H1 (cell line): ENCODE measurements at regions of chr9 and their contacts with region 1.

Region 1: DNA sequence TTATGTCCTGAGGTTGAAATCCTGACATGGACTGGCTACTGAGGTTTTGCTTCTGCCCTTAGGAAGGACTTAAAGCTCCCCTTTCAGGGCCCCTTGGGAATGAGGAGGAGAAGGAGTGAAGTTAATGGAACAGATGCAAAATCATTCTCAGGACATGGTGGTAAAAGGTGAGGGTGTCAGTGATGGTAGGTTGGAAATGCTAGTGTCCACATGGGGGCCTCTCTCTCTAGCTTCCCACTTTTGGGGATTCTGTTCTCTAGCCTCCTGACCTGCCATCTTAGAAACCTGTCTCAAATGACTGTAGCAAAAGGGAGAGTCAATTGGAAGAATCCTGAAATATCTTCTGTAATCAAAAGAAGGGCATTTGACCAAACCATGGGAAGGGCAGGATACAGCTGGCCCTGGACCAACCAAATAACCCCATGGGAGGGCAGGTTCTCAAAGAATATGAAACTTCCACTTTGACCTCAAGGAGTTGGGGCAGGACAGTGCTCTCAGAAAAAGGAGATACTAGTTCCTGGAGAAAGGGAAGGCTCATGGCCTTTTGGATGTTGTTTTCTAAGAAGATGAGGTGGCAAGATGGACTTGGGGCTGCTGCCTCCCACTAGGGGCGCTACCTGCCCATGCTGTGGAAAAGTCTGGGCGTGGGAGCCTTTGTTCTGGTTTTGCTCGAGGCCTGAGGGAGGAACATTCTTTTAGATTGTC is 21.2 kb upstream of the MLANA start:
- DNase-seq: peak in 1 of 2 experiments; percentile 70
- H3K4me3 ChIP-seq: no peak overlapping the region
- H3K27ac ChIP-seq: no peak overlapping the region
- H3K4me1 ChIP-seq: peaks cover 0 to 2% (median 2%) of the 10 kb centered on the region in 4 experiments; a peak in 4 of 7 replicates
- H3K27me3 ChIP-seq: no peaks in the 10 kb centered on the region
- CTCF ChIP-seq: peak; percentile 59 to 81 (median 74)
- EP300 ChIP-seq: no peak
- POLR2A ChIP-seq: no peak
- RAD21 ChIP-seq: peak; percentile 63 to 65

Region 2: GRCh38 chr9:5857928-5858327 is 11.5 kb before region 1 on chr9:
- CTCF ChIA-PET with region 1: interaction called, 13 read pairs
- POLR2A ChIA-PET with region 1: interaction called, 4 read pairs
- DNase-seq: no peak
- H3K4me3 ChIP-seq: no peak overlapping the region
- H3K27ac ChIP-seq: no peak overlapping the region
- H3K4me1 ChIP-seq: no peaks in the 10 kb centered on the region
- H3K27me3 ChIP-seq: no peaks in the 10 kb centered on the region
- CTCF ChIP-seq: no peak
- EP300 ChIP-seq: no peak
- POLR2A ChIP-seq: no peak
- RAD21 ChIP-seq: no peak

Region 3: GRCh38 chr9:5899292-5899691 is 29.8 kb after region 1 on chr9:
- CTCF ChIA-PET with region 1: interaction called, 17 read pairs
- POLR2A ChIA-PET with region 1: no interaction called
- DNase-seq: no peak
- H3K4me3 ChIP-seq: no peak overlapping the region
- H3K27ac ChIP-seq: no peak overlapping the region
- H3K4me1 ChIP-seq: no peaks in the 10 kb centered on the region
- H3K27me3 ChIP-seq: no peaks in the 10 kb centered on the region
- CTCF ChIP-seq: peak; percentile 30 to 52 (median 50)
- EP300 ChIP-seq: no peak
- POLR2A ChIP-seq: no peak
- RAD21 ChIP-seq: peak; percentile 51 to 65